Mammary epithelial cell (primary cell): ENCODE measurements at regions of chr6 and their contacts with region 1.

Region 1: DNA sequence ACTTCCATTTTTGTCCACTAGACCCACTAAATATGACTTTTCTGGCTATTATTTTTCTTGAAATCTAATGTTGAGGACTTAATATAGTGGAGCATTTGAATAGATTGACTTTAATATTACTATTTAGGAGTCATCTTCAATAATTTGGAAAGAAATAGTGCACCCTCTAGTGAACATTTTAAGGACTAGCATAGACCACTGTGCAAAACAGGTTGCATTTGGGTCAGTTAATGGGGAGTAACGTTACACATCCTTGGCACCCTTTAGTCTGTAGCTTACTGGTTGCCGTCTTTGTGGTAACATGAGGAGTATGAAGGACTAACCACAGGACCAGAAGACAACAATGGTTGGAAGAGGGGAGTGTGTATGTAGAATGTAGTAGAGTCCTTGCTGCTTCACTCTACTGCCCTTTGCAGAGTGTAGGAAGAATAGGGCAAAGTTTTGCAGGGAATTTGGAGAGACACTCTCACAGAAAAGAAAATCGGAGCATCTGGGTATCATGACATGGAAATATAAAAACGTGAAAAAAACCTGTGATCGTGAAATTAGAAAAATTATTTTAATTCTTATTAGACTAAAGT is 25.2 kb downstream of the RFPL4B start:
- DNase-seq: no peak
- H3K4me3 ChIP-seq: no peak overlapping the region
- H3K27ac ChIP-seq: no peak overlapping the region
- H3K4me1 ChIP-seq: no peaks in the 10 kb centered on the region
- H3K27me3 ChIP-seq: peaks cover 3% of the 10 kb centered on the region
- CTCF ChIP-seq: peak; percentile 50 to 54

Region 2: DNA sequence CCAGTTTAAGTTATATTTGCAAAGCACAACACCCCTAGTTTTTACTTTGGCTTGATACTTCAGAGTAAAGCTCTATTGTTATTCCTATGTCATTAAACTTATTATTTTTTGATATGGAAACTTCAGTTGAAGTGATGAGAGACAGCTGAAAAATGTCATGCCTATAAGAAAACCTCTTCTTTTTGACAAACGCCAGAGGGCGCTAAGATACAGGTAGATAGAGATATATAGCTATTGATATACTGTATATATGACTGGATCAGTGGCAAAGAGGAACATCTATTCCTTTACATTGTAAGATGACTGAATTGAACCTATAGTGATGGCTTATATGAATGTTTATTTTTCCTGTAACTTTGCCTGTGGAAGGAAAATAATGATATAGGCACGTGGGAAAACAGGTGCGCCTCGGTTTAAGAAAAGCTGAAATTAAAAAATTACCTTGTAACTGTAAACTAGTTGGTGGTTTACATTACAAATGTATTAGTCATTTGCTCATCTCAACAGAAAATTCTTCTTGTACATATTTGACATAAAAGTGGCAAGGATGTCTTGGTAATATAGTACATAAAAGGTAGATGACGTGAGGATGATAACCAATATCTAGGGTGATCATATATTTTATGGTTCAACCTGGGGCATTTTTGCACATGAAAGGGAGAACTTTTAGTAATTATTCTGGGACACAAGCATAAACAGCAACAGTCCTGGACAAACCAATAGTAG is 192.1 kb before region 1 on chr6:
- CTCF ChIA-PET with region 1: interaction called, 6 read pairs
- dilution Hi-C with region 1: no loop called
- in situ Hi-C with region 1: no loop called
- intact Hi-C with region 1: loop called (anchors 1 kb)
- DNase-seq: peak; percentile 57
- H3K4me3 ChIP-seq: no peak overlapping the region
- H3K27ac ChIP-seq: no peak overlapping the region
- H3K4me1 ChIP-seq: no peaks in the 10 kb centered on the region
- H3K27me3 ChIP-seq: no peaks in the 10 kb centered on the region
- CTCF ChIP-seq: peak; percentile 48 to 76

Region 3: DNA sequence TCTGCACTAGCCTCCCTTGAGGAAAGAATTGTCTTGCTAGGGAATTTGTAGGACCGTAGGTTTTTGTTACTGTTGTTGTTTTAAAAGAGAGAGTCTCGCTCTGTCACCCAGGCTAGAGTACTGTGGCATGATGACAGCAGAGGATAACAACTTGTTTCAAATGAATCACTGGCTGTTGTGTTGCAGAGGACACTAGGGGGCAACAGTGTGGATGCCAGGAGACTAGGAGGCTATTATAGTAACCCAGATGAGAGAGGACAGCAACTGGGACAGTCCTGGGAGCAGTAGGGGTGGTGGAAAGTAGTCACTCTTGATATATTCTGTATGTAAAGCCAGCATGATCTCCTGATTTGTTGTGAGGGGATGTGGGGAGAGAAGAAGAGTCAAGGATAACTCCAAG is 76.2 kb before region 1 on chr6:
- CTCF ChIA-PET with region 1: no interaction called
- dilution Hi-C with region 1: no loop called
- in situ Hi-C with region 1: no loop called
- intact Hi-C with region 1: loop called (anchors 1 kb)
- DNase-seq: peak; percentile 30
- H3K4me3 ChIP-seq: no peak overlapping the region
- H3K27ac ChIP-seq: no peak overlapping the region
- H3K4me1 ChIP-seq: peaks cover 15% of the 10 kb centered on the region
- H3K27me3 ChIP-seq: no peaks in the 10 kb centered on the region
- CTCF ChIP-seq: peak; percentile 49 to 50

Region 4: DNA sequence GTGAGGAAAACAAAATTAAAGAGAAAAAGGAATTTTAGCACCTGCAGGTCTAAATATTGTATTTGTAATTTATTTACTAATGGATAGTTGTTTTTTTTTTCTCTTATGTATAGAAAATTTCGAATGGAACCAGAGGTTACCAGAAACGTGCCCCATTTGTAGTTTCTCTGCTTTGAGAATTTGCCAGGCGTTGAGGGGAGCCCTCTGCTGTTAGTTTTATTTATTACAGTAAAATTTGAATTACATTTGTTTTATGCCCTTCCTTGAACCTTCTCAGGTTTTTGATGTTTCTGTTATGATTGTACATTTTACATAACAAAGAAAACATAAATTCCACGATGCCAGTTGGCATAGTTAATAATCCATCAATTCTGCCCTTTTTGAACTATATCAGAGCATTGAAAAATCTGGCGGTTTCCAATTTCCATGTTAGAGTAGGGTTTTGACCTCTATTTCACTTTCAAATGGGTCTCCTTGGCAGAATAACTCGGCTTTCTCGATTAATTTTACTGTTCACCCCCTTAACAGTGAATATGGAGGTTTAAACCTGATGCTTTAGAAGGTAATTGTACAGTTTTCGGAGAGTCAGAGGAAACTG is 60.3 kb before region 1 on chr6:
- CTCF ChIA-PET with region 1: no interaction called
- dilution Hi-C with region 1: no loop called
- in situ Hi-C with region 1: no loop called
- intact Hi-C with region 1: loop called (anchors 1 kb)
- DNase-seq: no peak
- H3K4me3 ChIP-seq: no peak overlapping the region
- H3K27ac ChIP-seq: no peak overlapping the region
- H3K4me1 ChIP-seq: no peaks in the 10 kb centered on the region
- H3K27me3 ChIP-seq: no peaks in the 10 kb centered on the region
- CTCF ChIP-seq: peak; percentile 57 to 67

Region 5: DNA sequence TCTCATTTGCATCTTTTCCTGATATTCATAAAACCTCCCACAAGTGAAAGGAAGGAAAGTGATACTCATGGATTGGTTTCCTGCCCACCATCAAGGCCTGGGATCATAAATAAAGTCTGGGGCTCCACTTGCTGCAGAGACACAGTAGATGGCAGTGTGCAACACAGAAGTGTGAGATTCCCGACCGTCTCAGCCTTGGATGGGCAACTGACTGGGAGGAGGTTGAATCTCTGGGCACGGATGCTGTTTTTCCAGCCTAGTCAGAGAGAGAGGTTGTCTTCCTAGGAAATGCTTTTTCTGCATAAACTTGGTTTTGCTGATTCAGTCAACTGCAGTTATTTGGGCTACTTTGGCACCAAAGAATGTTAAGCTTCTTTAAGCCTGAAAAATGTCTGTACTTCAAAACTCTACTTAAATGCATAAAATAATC is 35.1 kb before region 1 on chr6:
- CTCF ChIA-PET with region 1: no interaction called
- dilution Hi-C with region 1: no loop called
- in situ Hi-C with region 1: no loop called
- intact Hi-C with region 1: loop called (anchors 1 kb)
- DNase-seq: peak; percentile 52
- H3K4me3 ChIP-seq: no peak overlapping the region
- H3K27ac ChIP-seq: no peak overlapping the region
- H3K4me1 ChIP-seq: peaks cover 3% of the 10 kb centered on the region
- H3K27me3 ChIP-seq: no peaks in the 10 kb centered on the region
- CTCF ChIP-seq: peak; percentile 76 to 84